CD4-positive, alpha-beta T cell (primary cell): ENCODE measurements at regions of chr2 and their contacts with region 1.

Region 1: DNA sequence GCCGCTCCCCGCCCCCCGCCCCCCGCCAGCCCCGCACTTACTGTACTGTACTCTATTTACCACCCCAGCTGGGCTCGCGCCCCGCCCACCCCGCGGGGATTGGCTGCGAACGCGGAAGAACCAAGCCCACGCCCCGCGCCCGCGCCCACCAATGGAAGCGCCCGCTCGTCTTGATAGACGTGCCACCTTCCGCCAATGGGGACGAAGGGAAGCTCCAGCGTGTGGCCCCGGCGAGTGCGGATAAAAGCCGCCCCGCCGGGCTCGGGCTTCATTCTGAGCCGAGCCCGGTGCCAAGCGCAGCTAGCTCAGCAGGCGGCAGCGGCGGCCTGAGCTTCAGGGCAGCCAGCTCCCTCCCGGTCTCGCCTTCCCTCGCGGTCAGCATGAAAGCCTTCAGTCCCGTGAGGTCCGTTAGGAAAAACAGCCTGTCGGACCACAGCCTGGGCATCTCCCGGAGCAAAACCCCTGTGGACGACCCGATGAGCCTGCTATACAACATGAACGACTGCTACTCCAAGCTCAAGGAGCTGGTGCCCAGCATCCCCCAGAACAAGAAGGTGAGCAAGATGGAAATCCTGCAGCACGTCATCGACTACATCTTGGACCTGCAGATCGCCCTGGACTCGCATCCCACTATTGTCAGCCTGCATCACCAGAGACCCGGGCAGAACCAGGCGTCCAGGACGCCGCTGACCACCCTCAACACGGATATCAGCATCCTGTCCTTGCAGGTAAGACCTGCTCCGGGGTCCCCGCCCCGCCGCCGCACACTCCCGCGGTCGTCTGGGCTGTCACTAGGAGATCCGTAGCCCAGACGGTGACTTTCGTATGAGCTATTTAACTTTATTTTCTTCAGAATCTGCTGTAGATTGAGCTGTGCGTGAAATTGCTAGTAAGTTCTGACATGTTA is at the start of gene ID2:
- DNase-seq: peak; percentile 97 to 99 (median 98)
- ATAC-seq: peak; percentile 73
- H3K4me3 ChIP-seq: peak within 1 kb of the TSS; percentile 77
- H3K4me3 Mint-ChIP-seq: peak within 1 kb of the TSS; percentile 99
- H3K27ac ChIP-seq: peak within 1 kb of the TSS; percentile 37 to 52
- H3K27ac Mint-ChIP-seq: peak within 1 kb of the TSS; percentile 89
- H3K4me1 ChIP-seq: peaks cover 46% of the 10 kb centered on the region
- H3K4me1 Mint-ChIP-seq: peaks cover 54% of the 10 kb centered on the region
- H3K27me3 ChIP-seq: peaks cover 12 to 23% of the 10 kb centered on the region in 2 experiments
- H3K27me3 Mint-ChIP-seq: peaks cover 20% of the 10 kb centered on the region
- CTCF ChIP-seq: no peak
- total RNA-seq, gene ID2: 238 to 242 TPM

Region 2: DNA sequence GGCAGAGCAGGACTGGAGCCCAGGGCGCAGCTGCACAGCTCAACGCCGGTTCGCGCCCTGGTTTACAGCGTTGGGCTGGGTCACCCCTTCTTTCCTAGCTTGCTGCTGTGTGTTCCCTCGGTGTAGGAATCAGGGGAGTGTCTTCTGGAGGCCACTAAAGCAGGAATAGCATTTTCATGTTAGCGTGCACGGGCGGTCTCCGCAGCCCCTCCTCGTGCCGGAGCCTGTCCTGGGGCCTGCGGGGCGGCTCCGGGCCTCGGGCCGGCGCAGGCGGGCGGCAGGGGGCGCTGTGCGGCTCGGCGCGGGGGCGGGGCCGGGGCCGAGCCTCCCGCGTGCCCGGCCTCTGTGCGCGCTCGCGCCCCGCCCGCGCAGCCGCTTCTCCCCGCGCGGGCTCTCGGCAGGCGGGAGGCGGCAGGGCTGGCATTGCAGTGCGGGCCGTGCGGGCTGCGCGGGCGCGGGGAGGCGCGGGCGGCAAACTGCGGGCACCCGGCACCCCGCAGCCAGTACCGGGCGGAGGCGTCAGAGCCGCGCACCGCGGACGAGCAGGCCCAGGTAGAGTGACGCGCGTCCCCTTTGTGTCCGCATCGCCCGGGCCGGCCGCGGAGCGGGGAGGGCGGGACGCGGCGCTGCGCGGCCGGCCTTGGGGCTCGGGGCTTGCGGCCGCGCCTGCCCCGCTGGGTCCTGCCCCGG is 1764.8 kb before region 1 on chr2 and contains the start of gene RNF144A:
- CTCF ChIA-PET with region 1: no interaction called
- POLR2A ChIA-PET with region 1: interaction called, 6 read pairs
- intact Hi-C with region 1: loop called in 1 of 2 experiments (anchors 10 kb)
- DNase-seq: peak; percentile 56 to 91 (median 69)
- ATAC-seq: peak; percentile 69
- H3K4me3 ChIP-seq: peak within 1 kb of the TSS; percentile 68
- H3K4me3 Mint-ChIP-seq: peak within 1 kb of the TSS; percentile 85
- H3K27ac ChIP-seq: peak within 1 kb of the TSS in 1 of 2 donors; percentile 29
- H3K27ac Mint-ChIP-seq: peak within 1 kb of the TSS; percentile 85
- H3K4me1 ChIP-seq: peaks cover 74% of the 10 kb centered on the region
- H3K4me1 Mint-ChIP-seq: peaks cover 82% of the 10 kb centered on the region
- H3K27me3 ChIP-seq: no peaks in the 10 kb centered on the region
- H3K27me3 Mint-ChIP-seq: no peaks in the 10 kb centered on the region
- CTCF ChIP-seq: peak; percentile 60
- total RNA-seq, gene RNF144A: 39.0 to 40.1 TPM

Region 3: GRCh38 chr2:7097348-7097895 is 1584.6 kb before region 1 on chr2:
- CTCF ChIA-PET with region 1: no interaction called
- POLR2A ChIA-PET with region 1: interaction called, 4 read pairs
- intact Hi-C with region 1: loop called (anchors 1 kb)
- DNase-seq: peak; percentile 44 to 86 (median 66)
- ATAC-seq: peak; percentile 97
- H3K4me3 ChIP-seq: peak overlapping the region; percentile 6
- H3K4me3 Mint-ChIP-seq: peak overlapping the region; percentile 42
- H3K27ac ChIP-seq: no peak overlapping the region
- H3K27ac Mint-ChIP-seq: no peak overlapping the region
- H3K4me1 ChIP-seq: peaks cover 9% of the 10 kb centered on the region
- H3K4me1 Mint-ChIP-seq: peaks cover 7% of the 10 kb centered on the region
- H3K27me3 ChIP-seq: no peaks in the 10 kb centered on the region
- H3K27me3 Mint-ChIP-seq: no peaks in the 10 kb centered on the region
- CTCF ChIP-seq: peak; percentile 99

Region 4: DNA sequence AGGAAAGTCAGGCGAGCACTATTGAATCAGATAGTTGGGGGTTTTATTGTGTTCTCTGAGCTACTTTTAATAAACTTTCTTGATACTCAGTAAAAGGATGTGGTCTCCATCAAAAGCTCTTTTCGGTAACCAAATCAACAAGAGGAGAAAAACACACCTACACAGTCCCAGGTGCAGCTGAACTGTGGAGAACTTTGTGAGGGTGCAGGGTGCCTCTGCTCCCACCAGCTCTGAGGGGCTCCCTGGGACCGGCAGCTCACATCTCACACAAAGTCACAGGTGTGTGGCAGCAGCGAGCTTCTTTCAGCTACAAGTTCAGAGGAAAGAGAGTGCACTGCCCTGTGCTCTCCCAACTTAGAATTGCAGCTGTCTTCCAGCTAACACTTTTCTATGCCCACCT is 1114.4 kb before region 1 on chr2:
- CTCF ChIA-PET with region 1: no interaction called
- POLR2A ChIA-PET with region 1: interaction called, 53 read pairs
- intact Hi-C with region 1: loop called in 1 of 2 experiments (anchors 10 kb)
- DNase-seq: peak; percentile 7 to 75 (median 54)
- ATAC-seq: peak; percentile 88
- H3K4me3 ChIP-seq: no peak overlapping the region
- H3K4me3 Mint-ChIP-seq: peak overlapping the region; percentile 43
- H3K27ac ChIP-seq: peak overlapping the region; percentile 52 to 62
- H3K27ac Mint-ChIP-seq: peak overlapping the region; percentile 91
- H3K4me1 ChIP-seq: peaks cover 31% of the 10 kb centered on the region
- H3K4me1 Mint-ChIP-seq: peaks cover 67% of the 10 kb centered on the region
- H3K27me3 ChIP-seq: no peaks in the 10 kb centered on the region
- H3K27me3 Mint-ChIP-seq: no peaks in the 10 kb centered on the region
- CTCF ChIP-seq: peak; percentile 12

Region 5: DNA sequence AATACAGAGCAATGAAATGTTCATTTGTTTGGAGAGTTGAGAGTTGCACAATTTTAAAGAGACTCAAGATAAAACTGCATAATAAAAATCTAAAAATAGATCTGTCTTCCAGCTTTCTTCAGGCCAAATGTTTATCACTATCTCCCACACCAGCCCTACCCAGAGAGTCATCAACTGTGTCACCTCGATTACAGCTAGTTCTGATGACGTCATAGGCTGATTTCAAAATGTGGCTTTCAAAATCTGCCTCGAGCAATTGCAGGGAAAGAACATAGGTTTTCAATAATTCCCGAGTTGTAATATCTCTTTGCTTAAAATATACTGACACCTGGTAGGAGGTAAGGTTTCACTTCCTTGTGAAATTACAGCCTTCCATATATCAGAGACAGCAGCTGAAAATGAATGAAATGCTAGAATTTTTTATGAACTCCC is 677.8 kb before region 1 on chr2:
- CTCF ChIA-PET with region 1: no interaction called
- POLR2A ChIA-PET with region 1: no interaction called
- intact Hi-C with region 1: loop called in 1 of 2 experiments (anchors 5 kb)
- DNase-seq: peak in 2 of 14 experiments; percentile 50 to 58
- ATAC-seq: no peak
- H3K4me3 ChIP-seq: no peak overlapping the region
- H3K4me3 Mint-ChIP-seq: no peak overlapping the region
- H3K27ac ChIP-seq: no peak overlapping the region
- H3K27ac Mint-ChIP-seq: no peak overlapping the region
- H3K4me1 ChIP-seq: no peaks in the 10 kb centered on the region
- H3K4me1 Mint-ChIP-seq: no peaks in the 10 kb centered on the region
- H3K27me3 ChIP-seq: no peaks in the 10 kb centered on the region
- H3K27me3 Mint-ChIP-seq: no peaks in the 10 kb centered on the region
- CTCF ChIP-seq: no peak

Region 6: GRCh38 chr2:8669157-8669817 is 12.8 kb before region 1 on chr2:
- CTCF ChIA-PET with region 1: no interaction called
- POLR2A ChIA-PET with region 1: interaction called, 14 read pairs
- intact Hi-C with region 1: no loop called
- DNase-seq: no peak
- ATAC-seq: no peak
- H3K4me3 ChIP-seq: no peak overlapping the region
- H3K4me3 Mint-ChIP-seq: no peak overlapping the region
- H3K27ac ChIP-seq: no peak overlapping the region
- H3K27ac Mint-ChIP-seq: no peak overlapping the region
- H3K4me1 ChIP-seq: peaks cover 11% of the 10 kb centered on the region
- H3K4me1 Mint-ChIP-seq: peaks cover 12% of the 10 kb centered on the region
- H3K27me3 ChIP-seq: peaks cover 0 to 5% of the 10 kb centered on the region in 2 experiments
- H3K27me3 Mint-ChIP-seq: peaks cover 16% of the 10 kb centered on the region
- CTCF ChIP-seq: no peak

Region 7: DNA sequence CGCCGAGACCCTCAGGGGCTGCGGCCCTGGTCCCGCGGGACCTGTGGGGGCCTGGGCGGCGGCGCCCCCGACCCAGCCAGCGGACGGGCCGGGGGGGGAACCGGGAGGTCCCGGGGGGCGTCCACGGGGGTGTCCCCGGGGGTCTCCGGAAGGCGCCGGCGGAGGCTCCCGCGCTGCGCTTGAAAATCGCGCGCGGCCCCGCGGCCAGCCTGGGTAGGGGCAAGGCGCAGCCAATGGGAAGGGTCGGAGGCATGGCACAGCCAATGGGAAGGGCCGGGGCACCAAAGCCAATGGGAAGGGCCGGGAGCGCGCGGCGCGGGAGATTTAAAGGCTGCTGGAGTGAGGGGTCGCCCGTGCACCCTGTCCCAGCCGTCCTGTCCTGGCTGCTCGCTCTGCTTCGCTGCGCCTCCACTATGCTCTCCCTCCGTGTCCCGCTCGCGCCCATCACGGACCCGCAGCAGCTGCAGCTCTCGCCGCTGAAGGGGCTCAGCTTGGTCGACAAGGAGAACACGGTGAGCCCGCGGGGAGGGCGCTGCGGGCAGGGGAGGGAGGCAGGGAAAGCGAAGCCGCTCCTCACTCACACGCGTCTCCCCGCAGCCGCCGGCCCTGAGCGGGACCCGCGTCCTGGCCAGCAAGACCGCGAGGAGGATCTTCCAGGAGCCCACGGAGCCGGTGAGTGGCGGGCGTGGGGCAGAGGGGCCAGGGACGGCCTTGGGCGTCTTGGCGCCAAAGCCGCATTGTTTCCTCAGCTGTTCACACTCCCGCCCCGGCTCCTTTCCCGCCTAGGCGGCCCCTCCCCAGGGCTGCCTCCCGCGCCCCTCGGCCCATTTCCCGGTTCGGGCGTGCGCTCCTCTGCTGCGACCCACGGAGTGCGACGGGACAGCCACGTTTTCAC is 1440.6 kb after region 1 on chr2 and contains the start of gene RRM2:
- CTCF ChIA-PET with region 1: no interaction called
- POLR2A ChIA-PET with region 1: no interaction called
- intact Hi-C with region 1: no loop called
- DNase-seq: peak; percentile 75 to 93 (median 84)
- ATAC-seq: peak; percentile 77
- H3K4me3 ChIP-seq: peak within 1 kb of the TSS; percentile 61
- H3K4me3 Mint-ChIP-seq: peak within 1 kb of the TSS; percentile 94
- H3K27ac ChIP-seq: no peak within 1 kb of the TSS
- H3K27ac Mint-ChIP-seq: peak within 1 kb of the TSS; percentile 78
- H3K4me1 ChIP-seq: peaks cover 60% of the 10 kb centered on the region
- H3K4me1 Mint-ChIP-seq: peaks cover 45% of the 10 kb centered on the region
- H3K27me3 ChIP-seq: peaks cover 11 to 13% of the 10 kb centered on the region in 2 experiments
- H3K27me3 Mint-ChIP-seq: peaks cover 19% of the 10 kb centered on the region
- CTCF ChIP-seq: no peak
- total RNA-seq, gene RRM2: 1.4 to 1.6 TPM